GM12878 (cell line): ENCODE measurements at regions of chr20 and their contacts with region 1.

Region 1: DNA sequence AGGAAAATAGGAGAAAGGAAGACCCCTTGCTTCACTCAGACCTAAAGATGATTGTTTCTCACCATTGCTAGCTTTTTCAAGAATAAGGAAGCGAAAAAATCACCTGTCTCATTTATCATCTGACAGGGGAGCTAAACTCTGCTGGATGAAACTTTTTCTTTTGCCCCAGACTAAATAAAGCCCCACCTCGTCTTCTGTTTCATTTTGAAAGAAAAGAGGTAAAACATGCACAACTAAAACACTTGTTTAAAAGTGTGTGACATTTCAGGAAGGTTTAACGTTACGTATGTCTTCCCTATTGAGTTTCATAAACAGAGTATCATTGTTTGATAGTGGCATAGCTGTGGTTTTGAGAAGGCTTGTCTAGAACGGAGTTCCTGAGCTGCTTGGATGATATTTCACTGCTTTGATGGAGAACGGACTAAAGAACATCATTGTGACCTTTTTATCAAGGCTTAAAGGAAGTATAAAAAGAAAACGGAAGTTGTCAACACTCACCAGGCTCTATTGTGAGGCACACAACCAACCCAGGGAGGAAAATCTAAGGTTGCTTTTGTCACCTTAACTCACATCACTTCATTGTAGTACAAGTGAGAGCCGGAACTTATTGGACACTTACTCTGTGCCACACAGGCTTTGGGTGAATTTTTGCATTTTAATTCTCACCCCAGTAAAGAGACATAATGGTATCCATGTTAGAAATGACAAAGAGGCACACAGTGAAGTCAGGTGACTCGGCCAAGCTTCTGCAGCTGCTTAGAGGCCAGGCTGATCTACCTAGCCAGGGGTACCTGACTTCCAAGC is 29.5 kb downstream of the TSHZ2 start:
- DNase-seq: peak; percentile 55
- ATAC-seq: peak; percentile 86
- H3K4me3 ChIP-seq: peak overlapping the region; percentile 33; the same call in 1 of the 2 replicates
- H3K27ac ChIP-seq: peak overlapping the region; percentile 33
- H3K4me1 ChIP-seq: peaks cover 14% of the 10 kb centered on the region
- H3K27me3 ChIP-seq: no peaks in the 10 kb centered on the region
- CTCF ChIP-seq: no peak
- EP300 ChIP-seq: peak in 1 of 2 experiments; percentile 72; a peak in 2 of 4 replicates
- POLR2A ChIP-seq: no peak
- RAD21 ChIP-seq: no peak

Region 2: GRCh38 chr20:52972190-52972937 is 29.3 kb before region 1 on chr20 and contains the start of gene TSHZ2:
- CTCF ChIA-PET with region 1: interaction called, 24 read pairs
- POLR2A ChIA-PET with region 1: interaction called, 8 read pairs
- RAD21 ChIA-PET with region 1: interaction called, 31 read pairs
- SMC1A ChIA-PET with region 1: interaction called, 138 read pairs
- in situ Hi-C with region 1: no loop called
- intact Hi-C with region 1: loop called (anchors 1 kb)
- DNase-seq: no peak
- ATAC-seq: peak; percentile 35
- H3K4me3 ChIP-seq: no peak within 1 kb of the TSS
- H3K27ac ChIP-seq: no peak within 1 kb of the TSS
- H3K4me1 ChIP-seq: no peaks in the 10 kb centered on the region
- H3K27me3 ChIP-seq: peaks cover 1 to 11% of the 10 kb centered on the region in 2 experiments; a peak in 3 of 4 replicates
- CTCF ChIP-seq: no peak
- EP300 ChIP-seq: no peak
- POLR2A ChIP-seq: no peak
- RAD21 ChIP-seq: no peak
- polyA plus RNA-seq, gene TSHZ2: not detected

Region 3: DNA sequence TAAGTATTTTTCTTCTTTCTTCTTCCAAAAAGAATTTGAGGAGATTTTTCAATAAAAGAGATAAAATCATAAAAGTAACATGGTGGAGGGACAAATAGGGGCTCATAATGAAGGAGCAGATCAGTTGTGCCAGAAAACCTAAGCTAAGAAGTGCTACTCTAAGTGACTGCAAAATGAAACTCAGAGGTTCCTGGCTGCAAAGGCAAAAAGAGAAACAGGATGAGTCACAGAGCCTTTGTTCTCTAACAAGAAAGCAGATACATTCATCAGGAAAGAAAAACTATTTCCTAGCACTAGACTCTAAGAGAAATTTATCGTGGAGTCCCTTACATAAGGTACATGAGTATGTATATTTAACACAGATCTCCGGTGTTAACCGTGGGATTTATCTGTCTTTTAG is 20.2 kb after region 1 on chr20:
- CTCF ChIA-PET with region 1: interaction called, 8 read pairs
- POLR2A ChIA-PET with region 1: interaction called, 6 read pairs
- RAD21 ChIA-PET with region 1: interaction called, 13 read pairs
- SMC1A ChIA-PET with region 1: interaction called, 28 read pairs
- in situ Hi-C with region 1: no loop called
- intact Hi-C with region 1: no loop called
- DNase-seq: no peak
- ATAC-seq: peak; percentile 90
- H3K4me3 ChIP-seq: no peak overlapping the region
- H3K27ac ChIP-seq: no peak overlapping the region
- H3K4me1 ChIP-seq: no peaks in the 10 kb centered on the region
- H3K27me3 ChIP-seq: no peaks in the 10 kb centered on the region; a peak in 1 of 4 replicates
- CTCF ChIP-seq: no peak
- EP300 ChIP-seq: no peak
- POLR2A ChIP-seq: no peak
- RAD21 ChIP-seq: no peak

Region 4: DNA sequence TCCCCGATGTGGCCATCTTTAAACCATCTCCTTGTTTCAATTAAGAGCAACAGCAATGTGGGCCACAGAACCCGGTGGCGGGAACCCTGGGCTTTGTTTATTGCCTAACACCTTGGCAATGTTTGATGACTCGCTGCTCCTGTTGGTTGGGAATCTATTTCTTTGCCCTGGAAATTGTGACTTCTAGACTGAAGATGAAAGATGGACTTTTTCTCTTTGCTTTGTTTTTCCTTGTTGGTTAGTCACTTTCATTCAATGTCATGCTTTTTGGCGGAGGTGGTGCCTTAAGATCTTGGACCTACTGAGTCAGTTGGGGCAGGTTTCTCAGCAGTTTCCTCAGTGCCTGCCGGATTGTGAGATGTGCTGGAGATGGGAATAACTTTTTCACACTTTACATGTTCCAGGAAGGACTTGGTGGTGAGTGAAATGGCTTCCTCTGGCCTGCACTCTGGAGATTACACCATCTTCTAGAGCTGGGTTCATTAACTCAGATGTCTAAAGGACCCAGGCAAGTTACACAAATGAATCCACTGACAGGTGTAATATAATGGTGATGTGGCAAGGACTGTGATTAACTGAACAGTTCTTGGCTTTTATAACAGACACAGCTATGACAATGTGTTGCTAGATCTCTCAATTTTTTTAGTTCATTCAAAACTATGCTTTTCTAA is 26.8 kb after region 1 on chr20:
- CTCF ChIA-PET with region 1: interaction called, 4 read pairs
- POLR2A ChIA-PET with region 1: no interaction called
- RAD21 ChIA-PET with region 1: interaction called, 12 read pairs
- SMC1A ChIA-PET with region 1: interaction called, 28 read pairs
- in situ Hi-C with region 1: no loop called
- intact Hi-C with region 1: no loop called
- DNase-seq: no peak
- ATAC-seq: no peak
- H3K4me3 ChIP-seq: no peak overlapping the region
- H3K27ac ChIP-seq: no peak overlapping the region
- H3K4me1 ChIP-seq: no peaks in the 10 kb centered on the region
- H3K27me3 ChIP-seq: no peaks in the 10 kb centered on the region
- CTCF ChIP-seq: no peak
- EP300 ChIP-seq: no peak
- POLR2A ChIP-seq: no peak
- RAD21 ChIP-seq: no peak

Region 5: DNA sequence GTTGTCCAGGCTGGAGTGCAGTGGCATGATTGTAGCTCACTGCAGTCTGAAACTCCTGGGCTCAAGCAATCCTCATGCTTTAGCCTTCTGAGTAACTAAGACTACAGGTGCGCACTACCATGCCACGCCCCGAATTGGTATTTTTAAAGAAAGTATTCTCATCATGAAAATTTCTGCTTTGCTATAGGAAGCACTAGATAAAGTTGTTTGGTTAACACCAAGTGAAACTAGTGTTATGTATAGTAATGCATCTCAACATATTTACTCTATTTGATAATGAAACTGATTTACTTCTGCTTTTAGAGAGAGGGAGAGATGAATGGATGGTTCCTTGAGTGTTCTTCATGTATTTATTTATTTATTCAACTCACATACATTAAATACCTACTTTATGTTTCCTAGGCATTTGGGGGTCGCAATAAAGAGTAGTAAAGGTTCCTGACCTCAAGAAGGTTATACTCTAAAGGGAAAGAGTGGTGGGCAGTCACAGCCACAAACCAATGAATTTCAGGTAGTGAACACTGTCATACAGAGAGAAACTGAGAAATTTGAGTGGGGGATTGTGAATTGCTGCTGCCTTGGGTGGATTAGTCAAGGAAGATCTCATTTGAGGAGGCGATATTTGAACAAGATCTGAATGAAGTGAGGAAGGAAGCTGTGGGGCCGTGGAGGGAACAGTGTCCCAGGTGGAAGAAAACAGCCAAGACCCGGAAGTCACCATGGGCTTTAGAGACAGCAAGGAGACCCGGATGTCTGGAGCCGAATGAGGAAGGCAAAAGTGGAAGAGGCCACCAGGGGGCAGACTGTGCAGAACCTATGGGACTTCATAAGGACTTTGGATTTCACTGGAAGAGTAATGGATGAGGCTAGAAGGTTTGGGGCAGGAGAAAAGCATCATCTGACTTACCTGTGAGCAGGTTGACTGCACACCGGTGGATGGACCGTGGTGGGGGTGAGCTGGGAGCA is 156.0 kb after region 1 on chr20:
- CTCF ChIA-PET with region 1: no interaction called
- POLR2A ChIA-PET with region 1: no interaction called
- RAD21 ChIA-PET with region 1: interaction called, 4 read pairs
- SMC1A ChIA-PET with region 1: interaction called, 6 read pairs
- in situ Hi-C with region 1: no loop called
- intact Hi-C with region 1: loop called (anchors 10 kb)
- DNase-seq: no peak
- ATAC-seq: peak; percentile 86
- H3K4me3 ChIP-seq: no peak overlapping the region
- H3K27ac ChIP-seq: peak overlapping the region; percentile 62; the same call in 1 of the 2 replicates
- H3K4me1 ChIP-seq: peaks cover 16% of the 10 kb centered on the region
- H3K27me3 ChIP-seq: no peaks in the 10 kb centered on the region
- CTCF ChIP-seq: peak; percentile 11 to 55 (median 53); a peak in 4 of 6 replicates
- EP300 ChIP-seq: no peak
- POLR2A ChIP-seq: no peak
- RAD21 ChIP-seq: peak; percentile 21; the same call in 1 of the 2 replicates